ENCODE measurements at regions of chr18 and their contacts with region 1.

Region 1: GRCh38 chr18:48475635-48476549 is 62.9 kb upstream of the CTIF start:
- DNase-seq: peak; percentile 73
- H3K4me3 ChIP-seq: no peak overlapping the region
- H3K27ac ChIP-seq: no peak overlapping the region
- H3K4me1 ChIP-seq: peaks cover 0 to 3% of the 10 kb centered on the region in 2 experiments; a peak in 1 of 4 replicates
- H3K27me3 ChIP-seq: no peaks in the 10 kb centered on the region
- CTCF ChIP-seq: peak; percentile 89
- EP300 ChIP-seq: no peak
- RAD21 ChIP-seq: peak; percentile 98

Region 2: GRCh38 chr18:48244530-48244929 is 231.4 kb before region 1 on chr18:
- CTCF ChIA-PET with region 1: no interaction called
- POLR2A ChIA-PET with region 1: no interaction called
- DNase-seq: no peak
- H3K4me3 ChIP-seq: no peak overlapping the region
- H3K27ac ChIP-seq: no peak overlapping the region
- H3K4me1 ChIP-seq: no peaks in the 10 kb centered on the region
- H3K27me3 ChIP-seq: no peaks in the 10 kb centered on the region
- CTCF ChIP-seq: no peak
- EP300 ChIP-seq: no peak
- RAD21 ChIP-seq: no peak

Region 3: DNA sequence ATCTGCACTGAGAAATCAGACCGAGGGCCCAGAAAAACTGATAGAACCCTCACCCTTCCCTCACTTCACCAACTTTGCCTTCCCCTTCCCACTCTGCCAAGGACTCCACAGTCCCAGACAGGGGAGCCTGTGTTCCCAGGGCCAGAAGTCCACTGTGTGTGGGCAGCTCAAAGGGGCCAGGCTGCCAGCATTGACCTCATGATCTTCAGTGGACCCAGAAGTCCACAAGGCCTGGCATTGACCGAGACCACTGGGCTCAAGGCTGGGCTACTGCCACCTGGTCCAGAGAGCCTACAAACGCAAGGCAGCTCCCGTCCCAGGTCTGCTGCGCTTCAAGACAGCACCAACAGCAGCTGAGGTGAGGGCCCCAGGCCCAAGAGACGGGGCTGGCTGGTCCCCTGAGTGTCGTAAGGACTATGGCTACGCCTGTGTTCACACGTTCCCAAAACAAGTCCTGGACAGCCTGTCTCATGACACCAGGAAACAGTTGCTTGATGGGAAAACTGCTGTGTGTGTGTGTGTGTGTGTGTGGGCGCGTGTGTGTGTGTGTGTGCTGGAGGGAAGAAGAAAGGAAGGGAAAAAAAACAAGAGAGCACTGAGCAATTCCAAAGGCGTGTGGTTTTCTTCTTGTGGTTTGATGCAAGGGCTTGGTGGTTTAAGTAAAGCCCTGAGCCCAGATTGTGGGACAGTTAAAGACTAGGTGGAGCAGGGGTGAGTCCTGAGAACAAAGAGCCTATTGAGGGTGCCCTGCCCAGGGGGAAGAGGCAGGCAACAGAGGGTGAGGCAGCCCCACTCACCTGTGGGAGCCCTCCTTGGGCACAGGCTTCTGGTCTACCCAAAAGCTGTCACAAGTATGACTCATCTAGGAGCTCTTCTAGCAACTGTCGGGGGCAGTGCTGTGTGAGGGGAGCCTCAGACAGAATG is 20.1 kb before region 1 on chr18:
- CTCF ChIA-PET with region 1: interaction called, 10 read pairs
- POLR2A ChIA-PET with region 1: no interaction called
- DNase-seq: no peak
- H3K4me3 ChIP-seq: no peak overlapping the region
- H3K27ac ChIP-seq: no peak overlapping the region
- H3K4me1 ChIP-seq: peaks cover 0 to 24% of the 10 kb centered on the region in 2 experiments; a peak in 1 of 4 replicates
- H3K27me3 ChIP-seq: no peaks in the 10 kb centered on the region; the same call in 1 of the 2 replicates
- CTCF ChIP-seq: no peak
- EP300 ChIP-seq: no peak
- RAD21 ChIP-seq: no peak

Region 4: DNA sequence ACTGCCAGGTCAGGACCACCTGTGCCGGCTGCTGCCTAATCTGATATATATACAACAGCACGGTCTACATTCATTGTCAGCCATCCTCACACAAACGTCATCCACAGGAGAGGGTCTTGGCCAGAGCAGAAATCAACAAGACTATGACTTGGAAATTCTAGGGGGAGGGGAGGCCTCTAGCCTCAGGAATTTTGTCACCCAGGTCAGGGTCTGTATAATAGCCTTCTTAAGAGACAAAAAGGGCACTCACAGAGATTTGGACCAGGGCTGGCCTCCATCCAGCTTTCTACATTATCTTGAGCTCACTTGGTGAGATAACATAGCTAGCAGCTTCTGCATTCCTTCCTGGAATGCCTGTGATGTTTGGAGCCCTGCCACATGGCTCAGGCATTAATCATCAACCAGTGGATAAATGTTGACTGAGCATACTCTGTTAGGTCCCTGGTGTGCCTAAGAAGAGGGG is 12.5 kb after region 1 on chr18:
- CTCF ChIA-PET with region 1: interaction called, 28 read pairs
- POLR2A ChIA-PET with region 1: no interaction called
- DNase-seq: no peak
- H3K4me3 ChIP-seq: no peak overlapping the region
- H3K27ac ChIP-seq: peak overlapping the region in 1 of 2 experiments; percentile 28; a peak in 2 of 4 replicates
- H3K4me1 ChIP-seq: peaks cover 0 to 8% of the 10 kb centered on the region in 2 experiments; a peak in 2 of 4 replicates
- H3K27me3 ChIP-seq: no peaks in the 10 kb centered on the region
- CTCF ChIP-seq: no peak
- EP300 ChIP-seq: peak in 1 of 2 experiments; percentile 81; a peak in 1 of 4 replicates
- RAD21 ChIP-seq: no peak

Region 5: GRCh38 chr18:48663931-48664847 is 188.3 kb after region 1 on chr18:
- CTCF ChIA-PET with region 1: interaction called, 174 read pairs
- POLR2A ChIA-PET with region 1: interaction called, 3 read pairs
- DNase-seq: peak; percentile 84
- H3K4me3 ChIP-seq: no peak overlapping the region; a peak in 1 of 4 replicates
- H3K27ac ChIP-seq: no peak overlapping the region
- H3K4me1 ChIP-seq: peaks cover 17 to 36% of the 10 kb centered on the region in 2 experiments
- H3K27me3 ChIP-seq: no peaks in the 10 kb centered on the region
- CTCF ChIP-seq: peak; percentile 83
- EP300 ChIP-seq: no peak
- RAD21 ChIP-seq: peak; percentile 84

Region 6: GRCh38 chr18:49238433-49239042 is 762.6 kb after region 1 on chr18:
- CTCF ChIA-PET with region 1: interaction called, 12 read pairs
- POLR2A ChIA-PET with region 1: no interaction called
- DNase-seq: peak; percentile 44
- H3K4me3 ChIP-seq: no peak overlapping the region
- H3K27ac ChIP-seq: no peak overlapping the region
- H3K4me1 ChIP-seq: no peaks in the 10 kb centered on the region
- H3K27me3 ChIP-seq: no peaks in the 10 kb centered on the region
- CTCF ChIP-seq: peak; percentile 76
- EP300 ChIP-seq: no peak
- RAD21 ChIP-seq: peak; percentile 78

Measured in SK-N-SH (cell line).